ENCODE measurements at regions of chr2 and their contacts with region 1.

Region 1: GRCh38 chr2:102806250-102806837 is 44.5 kb downstream of the TMEM182 start:
- DNase-seq: peak; percentile 4
- H3K4me3 ChIP-seq: no peak overlapping the region
- H3K27me3 ChIP-seq: no peaks in the 10 kb centered on the region
- CTCF ChIP-seq: peak; percentile 91

Region 2: DNA sequence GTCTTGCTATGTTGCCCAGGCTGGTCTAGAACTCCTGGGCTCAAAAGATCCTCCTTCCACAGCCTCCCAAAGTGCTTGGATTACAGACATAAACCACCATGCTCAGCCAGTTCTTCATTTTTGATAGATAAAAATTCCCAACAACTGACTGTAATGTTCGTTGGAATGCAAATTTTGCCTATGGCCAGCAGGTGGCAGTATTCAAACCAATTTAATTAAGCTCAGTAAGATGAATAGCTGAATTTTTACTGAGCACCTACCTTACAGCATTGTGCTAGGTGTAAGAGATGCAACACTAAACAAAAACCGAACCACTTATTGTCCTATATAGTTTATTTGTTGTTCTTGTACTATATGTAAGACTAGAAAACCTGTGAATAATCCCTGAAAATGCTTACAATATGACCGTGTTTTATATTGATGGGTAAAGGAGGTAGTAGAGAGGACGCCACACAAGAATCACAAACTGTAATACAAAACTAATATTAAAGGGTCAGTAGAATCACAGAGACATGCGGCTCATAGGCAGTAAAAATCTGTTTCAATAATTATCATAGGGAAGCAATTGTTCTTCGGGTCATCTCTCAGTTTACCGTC is 52.7 kb before region 1 on chr2:
- CTCF ChIA-PET with region 1: interaction called, 68 read pairs
- POLR2A ChIA-PET with region 1: no interaction called
- DNase-seq: no peak
- H3K4me3 ChIP-seq: no peak overlapping the region
- H3K27me3 ChIP-seq: no peaks in the 10 kb centered on the region
- CTCF ChIP-seq: peak; percentile 76

Region 3: GRCh38 chr2:102761763-102762162 is 44.6 kb before region 1 on chr2 and contains the start of gene TMEM182:
- CTCF ChIA-PET with region 1: interaction called, 14 read pairs
- POLR2A ChIA-PET with region 1: no interaction called
- DNase-seq: no peak
- H3K4me3 ChIP-seq: no peak within 1 kb of the TSS
- H3K27me3 ChIP-seq: no peaks in the 10 kb centered on the region
- CTCF ChIP-seq: no peak
- polyA plus RNA-seq, gene TMEM182: 2.6 and 3.7 TPM in 2 replicates

Region 4: DNA sequence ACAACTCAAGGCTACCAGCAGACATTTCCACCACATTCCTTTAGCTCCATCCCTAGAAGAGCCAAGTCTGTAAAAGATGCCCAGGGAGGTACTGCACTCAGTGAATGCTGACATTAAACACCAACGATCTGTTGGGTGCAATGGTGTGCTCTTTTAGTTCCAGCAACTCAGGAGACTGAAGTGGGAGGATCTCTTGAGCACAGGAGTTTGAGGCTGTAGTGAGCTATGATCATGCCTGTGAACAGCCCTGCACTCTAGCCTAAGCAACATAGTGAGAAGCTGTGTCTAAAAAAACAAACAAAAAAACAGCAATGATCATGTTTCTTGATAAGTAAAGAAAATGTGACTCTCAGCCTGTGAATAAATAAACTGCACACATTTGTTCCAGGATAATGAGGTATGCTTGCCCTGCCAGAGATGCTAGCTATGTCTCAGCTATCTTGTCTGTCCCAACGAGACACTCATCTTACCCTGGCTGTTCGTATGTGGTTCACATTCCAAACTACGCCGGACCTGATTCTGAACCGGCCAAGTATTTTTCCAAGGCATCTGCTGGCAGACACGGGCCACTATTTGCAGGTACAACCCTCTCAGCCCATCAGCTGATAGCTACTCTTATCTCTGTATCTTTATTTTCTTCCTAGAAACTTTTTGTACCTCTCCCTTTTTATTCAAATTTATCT is 22.7 kb before region 1 on chr2:
- CTCF ChIA-PET with region 1: interaction called, 10 read pairs
- POLR2A ChIA-PET with region 1: no interaction called
- DNase-seq: no peak
- H3K4me3 ChIP-seq: no peak overlapping the region
- H3K27me3 ChIP-seq: no peaks in the 10 kb centered on the region
- CTCF ChIP-seq: no peak

Region 5: GRCh38 chr2:102788885-102789260 is 17.5 kb before region 1 on chr2:
- CTCF ChIA-PET with region 1: interaction called, 18 read pairs
- POLR2A ChIA-PET with region 1: no interaction called
- DNase-seq: no peak
- H3K4me3 ChIP-seq: no peak overlapping the region
- H3K27me3 ChIP-seq: no peaks in the 10 kb centered on the region
- CTCF ChIP-seq: no peak

Region 6: GRCh38 chr2:102796337-102796736 is 10.0 kb before region 1 on chr2:
- CTCF ChIA-PET with region 1: interaction called, 18 read pairs
- POLR2A ChIA-PET with region 1: no interaction called
- DNase-seq: no peak
- H3K4me3 ChIP-seq: no peak overlapping the region
- H3K27me3 ChIP-seq: no peaks in the 10 kb centered on the region
- CTCF ChIP-seq: no peak